ENCODE measurements at regions of chr13 and their contacts with region 1.

Region 1: GRCh38 chr13:108508263-108508662 is 121.1 kb upstream of the MYO16 start:
- DNase-seq: no peak
- H3K4me3 Mint-ChIP-seq: no peak overlapping the region
- H3K27ac Mint-ChIP-seq: no peak overlapping the region
- H3K4me1 Mint-ChIP-seq: peaks cover 3% of the 10 kb centered on the region
- H3K27me3 Mint-ChIP-seq: no peaks in the 10 kb centered on the region

Region 2: GRCh38 chr13:108342369-108343289 is 165.6 kb before region 1 on chr13:
- CTCF ChIA-PET with region 1: interaction called, 7 read pairs
- intact Hi-C with region 1: loop called (anchors 5 kb)
- DNase-seq: peak; percentile 28
- H3K4me3 Mint-ChIP-seq: peak overlapping the region; percentile 4
- H3K27ac Mint-ChIP-seq: peak overlapping the region; percentile 56
- H3K4me1 Mint-ChIP-seq: peaks cover 24% of the 10 kb centered on the region
- H3K27me3 Mint-ChIP-seq: no peaks in the 10 kb centered on the region

Region 3: GRCh38 chr13:108549934-108550333 is 41.7 kb after region 1 on chr13:
- CTCF ChIA-PET with region 1: no interaction called
- intact Hi-C with region 1: no loop called
- DNase-seq: no peak
- H3K4me3 Mint-ChIP-seq: no peak overlapping the region
- H3K27ac Mint-ChIP-seq: no peak overlapping the region
- H3K4me1 Mint-ChIP-seq: no peaks in the 10 kb centered on the region
- H3K27me3 Mint-ChIP-seq: peaks cover 2% of the 10 kb centered on the region